ENCODE measurements at regions of chr17 and their contacts with region 1.

Region 1: DNA sequence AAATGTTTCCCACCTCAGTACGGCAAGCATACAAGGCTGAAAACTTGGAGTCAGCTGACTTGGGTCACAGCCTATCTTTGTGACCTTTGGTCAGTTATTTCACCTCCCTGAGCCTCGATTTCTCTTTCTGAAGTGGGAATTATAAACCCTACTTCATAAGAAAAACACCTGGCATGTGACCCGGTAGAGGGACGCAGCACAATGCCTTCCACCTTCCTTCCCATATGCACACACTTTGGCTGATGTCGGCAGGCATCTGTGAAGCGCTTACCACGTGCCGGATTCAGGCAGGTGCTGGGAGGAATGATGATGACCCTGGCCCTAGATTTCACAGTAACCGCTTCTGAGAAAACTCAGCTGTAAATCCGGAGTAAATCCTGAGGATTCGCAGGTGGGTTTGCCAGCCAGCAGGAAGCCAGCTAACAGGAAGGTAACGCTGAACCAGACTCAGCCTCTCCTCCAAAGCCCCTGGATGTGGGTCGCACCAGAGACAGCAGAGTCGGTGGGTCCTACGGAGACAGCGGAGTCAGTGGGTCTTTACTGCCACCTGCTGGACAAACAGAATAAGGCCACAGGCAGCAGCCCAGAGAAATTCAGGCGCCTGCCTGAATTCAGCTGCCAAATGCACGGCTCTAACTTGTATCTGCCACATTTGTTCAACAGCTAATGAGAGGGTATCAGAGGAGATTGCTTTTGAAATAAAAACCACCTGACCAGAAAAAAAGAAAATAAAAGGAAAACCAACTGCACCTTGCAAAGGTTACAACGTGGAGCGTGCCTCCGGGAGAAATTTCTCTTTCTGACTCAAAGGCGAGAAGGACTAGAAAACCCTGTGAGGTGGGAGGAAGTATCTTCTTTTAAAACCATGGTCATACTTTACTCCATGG is 16.6 kb downstream of the COPRS start:
- DNase-seq: peak; percentile 60
- H3K4me3 ChIP-seq: peak overlapping the region; percentile 39; the same call in 1 of the 2 replicates
- H3K27ac ChIP-seq: peak overlapping the region; percentile 73
- H3K27me3 ChIP-seq: no peaks in the 10 kb centered on the region
- CTCF ChIP-seq: peak; percentile 97

Region 2: DNA sequence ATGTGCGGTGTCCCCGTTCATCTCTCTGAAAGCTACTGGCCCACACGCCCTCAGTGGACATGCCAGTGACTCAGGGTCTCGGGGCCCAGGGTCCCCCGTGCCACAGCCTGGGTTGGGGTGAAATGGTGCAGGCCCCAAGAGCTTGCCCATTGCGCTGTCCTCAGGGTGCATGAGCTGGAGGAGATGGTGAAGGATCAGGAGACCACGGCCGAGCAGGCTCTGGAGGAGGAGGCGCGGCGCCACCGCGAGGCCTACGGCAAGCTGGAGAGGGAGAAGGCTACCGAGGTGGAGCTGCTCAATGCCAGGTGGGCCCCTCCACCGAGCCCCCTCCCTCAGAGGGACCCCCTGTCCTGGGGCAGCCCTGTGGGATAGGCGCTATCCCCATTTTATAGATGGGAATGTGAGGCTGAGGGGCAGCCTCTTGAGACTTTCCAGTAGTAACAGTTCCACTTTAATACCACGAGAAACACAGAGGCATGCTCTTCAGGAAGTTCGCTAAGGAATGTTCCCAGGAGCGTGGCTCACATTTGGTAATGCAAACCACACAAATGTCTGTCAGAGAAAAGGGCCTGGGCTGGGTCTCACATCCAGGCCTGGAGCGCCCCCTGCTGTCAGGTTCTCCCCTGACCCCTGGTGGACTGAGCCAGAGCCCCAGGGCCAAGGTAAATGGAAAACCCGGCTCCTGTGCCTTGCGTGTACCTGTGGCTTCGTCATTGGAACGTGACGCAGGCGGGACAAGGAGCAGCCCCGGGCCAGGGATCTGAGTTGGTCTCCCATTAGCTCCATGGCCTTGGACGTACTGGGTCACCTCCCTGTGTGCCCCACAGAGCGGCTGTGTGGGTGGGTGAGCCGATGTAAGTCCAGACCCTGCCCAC is 317.3 kb before region 1 on chr17:
- CTCF ChIA-PET with region 1: interaction called, 19 read pairs
- POLR2A ChIA-PET with region 1: no interaction called
- DNase-seq: peak; percentile 83
- H3K4me3 ChIP-seq: no peak overlapping the region
- H3K27ac ChIP-seq: peak overlapping the region; percentile 52
- H3K27me3 ChIP-seq: no peaks in the 10 kb centered on the region
- CTCF ChIP-seq: peak; percentile 92

Region 3: DNA sequence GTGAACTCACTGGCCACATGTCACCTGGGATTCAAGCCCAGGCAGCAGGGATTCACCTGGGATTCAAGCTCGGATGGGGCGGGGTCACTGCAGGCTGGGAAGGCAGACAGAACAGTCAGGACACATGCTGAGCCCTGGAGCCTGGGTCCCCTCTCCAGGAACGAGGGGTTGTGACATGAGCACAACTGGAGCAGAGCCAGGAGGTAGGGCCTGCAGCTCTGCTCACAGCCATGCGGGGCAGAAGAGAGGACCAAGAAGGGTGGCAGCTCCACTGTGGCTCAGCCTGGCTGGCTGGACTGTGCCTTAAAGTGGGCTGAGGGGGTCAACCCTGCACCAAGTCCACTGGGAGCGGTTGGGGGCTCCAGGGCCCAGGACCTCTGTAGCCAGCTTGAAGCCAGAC is 300.9 kb before region 1 on chr17:
- CTCF ChIA-PET with region 1: interaction called, 12 read pairs
- POLR2A ChIA-PET with region 1: no interaction called
- DNase-seq: no peak
- H3K4me3 ChIP-seq: no peak overlapping the region
- H3K27ac ChIP-seq: no peak overlapping the region
- H3K27me3 ChIP-seq: no peaks in the 10 kb centered on the region
- CTCF ChIP-seq: peak; percentile 15; the same call in 1 of the 2 replicates

Region 4: DNA sequence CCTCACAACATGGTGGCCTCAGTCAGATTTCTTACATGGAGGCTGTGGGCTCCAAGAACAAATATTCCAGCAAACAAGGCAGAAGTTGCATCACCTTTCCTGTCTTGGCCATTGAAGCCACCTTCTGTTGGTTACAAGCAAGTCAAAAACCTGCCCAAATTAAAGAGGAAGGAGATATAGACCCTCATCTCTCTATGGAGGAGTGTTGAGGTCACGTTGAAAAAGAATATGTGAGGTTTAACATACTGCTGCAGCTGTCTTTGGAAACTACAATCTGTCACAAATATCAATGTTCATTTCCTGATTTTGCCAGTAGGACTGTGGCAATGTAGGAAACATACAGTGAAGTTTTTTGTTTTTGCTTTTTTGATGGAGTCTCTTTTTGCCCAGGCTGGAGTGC is 194.8 kb before region 1 on chr17:
- CTCF ChIA-PET with region 1: no interaction called
- POLR2A ChIA-PET with region 1: no interaction called
- DNase-seq: no peak
- H3K4me3 ChIP-seq: no peak overlapping the region
- H3K27ac ChIP-seq: no peak overlapping the region
- H3K27me3 ChIP-seq: peaks cover 3% of the 10 kb centered on the region
- CTCF ChIP-seq: no peak

Region 5: GRCh38 chr17:31820691-31821435 is 21.6 kb before region 1 on chr17:
- CTCF ChIA-PET with region 1: no interaction called
- POLR2A ChIA-PET with region 1: no interaction called
- DNase-seq: no peak
- H3K4me3 ChIP-seq: no peak overlapping the region
- H3K27ac ChIP-seq: no peak overlapping the region
- H3K27me3 ChIP-seq: no peaks in the 10 kb centered on the region
- CTCF ChIP-seq: no peak

Region 6: DNA sequence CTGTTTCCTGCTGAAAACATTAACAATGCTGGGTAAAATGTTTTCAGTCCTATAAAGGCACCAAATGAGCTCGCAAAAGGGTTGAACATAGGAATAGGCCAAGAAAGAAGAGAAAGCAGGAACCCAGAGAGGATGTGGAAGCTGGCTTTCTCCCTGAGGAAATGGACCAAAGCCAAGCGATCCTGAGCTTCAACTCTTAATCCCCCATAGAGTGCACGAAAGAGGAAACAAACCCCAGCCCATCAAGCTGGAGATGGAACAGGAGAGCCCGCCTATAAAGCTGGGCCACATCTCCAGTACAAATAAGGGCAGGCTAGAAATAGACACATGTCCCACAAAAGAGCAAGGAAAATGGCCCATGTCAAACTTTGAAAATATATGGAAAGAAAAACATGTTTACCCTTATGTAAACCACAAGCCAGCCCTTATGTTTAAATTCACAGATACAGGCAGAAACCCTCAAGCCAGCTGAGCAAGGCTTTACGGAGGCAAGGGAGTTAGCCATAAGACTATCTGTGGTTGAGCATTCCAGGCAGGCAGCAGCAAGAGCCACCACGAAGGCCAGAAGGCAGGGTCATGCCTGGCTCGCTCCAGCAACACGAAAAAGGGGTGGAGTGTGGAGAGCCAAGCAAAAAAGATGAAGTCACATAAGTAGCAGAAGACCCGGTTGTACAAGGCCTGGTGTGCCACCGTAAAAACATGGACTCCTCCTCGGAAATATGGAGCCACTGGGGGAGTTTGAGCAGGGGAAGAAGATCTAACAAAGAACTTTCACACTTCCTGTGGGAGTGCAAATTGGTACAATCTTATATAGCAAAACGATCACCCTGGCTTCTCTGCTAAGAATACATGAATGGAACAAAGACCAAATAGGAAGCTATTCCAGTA is 11.2 kb before region 1 on chr17:
- CTCF ChIA-PET with region 1: interaction called, 17 read pairs
- POLR2A ChIA-PET with region 1: no interaction called
- DNase-seq: no peak
- H3K4me3 ChIP-seq: no peak overlapping the region
- H3K27ac ChIP-seq: peak overlapping the region; percentile 52
- H3K27me3 ChIP-seq: no peaks in the 10 kb centered on the region
- CTCF ChIP-seq: no peak

Measured in AG04450 (cell line).